Gastrocnemius medialis (tissue), 4 donors: ENCODE measurements at regions of chr5 and their contacts with region 1.

Region 1: DNA sequence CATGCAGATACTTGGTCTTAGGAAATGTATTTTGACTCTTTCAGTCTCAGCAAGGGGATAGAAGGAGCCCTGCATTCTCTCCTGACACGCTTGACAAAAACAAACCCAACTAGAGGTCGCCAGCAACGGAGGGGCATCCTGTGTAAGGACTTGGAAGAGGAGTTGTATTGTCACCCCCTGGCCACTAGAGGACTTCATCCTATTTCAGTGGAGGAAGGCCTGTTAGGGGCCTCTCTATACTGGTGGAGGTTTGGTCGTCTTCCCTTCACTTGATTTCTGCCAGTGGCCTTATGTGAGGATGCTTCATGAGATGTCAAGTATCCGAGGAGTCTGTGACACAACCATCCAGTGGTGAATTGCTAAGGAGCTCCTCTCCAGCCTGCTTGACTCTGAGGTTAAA is 122.8 kb upstream of the STC2 start:
- DNase-seq: peak in 1 of 2 donors; percentile 41
- ATAC-seq: no peak
- H3K4me3 ChIP-seq: no peak overlapping the region
- H3K27ac ChIP-seq: peak overlapping the region; percentile 88 to 94 (median 90)
- H3K4me1 ChIP-seq: peaks cover 36 to 45% of the 10 kb centered on the region in 2 donors
- H3K27me3 ChIP-seq: no peaks in the 10 kb centered on the region
- CTCF ChIP-seq: peak; percentile 40 to 70 (median 48)
- POLR2A ChIP-seq: no peak

Region 2: DNA sequence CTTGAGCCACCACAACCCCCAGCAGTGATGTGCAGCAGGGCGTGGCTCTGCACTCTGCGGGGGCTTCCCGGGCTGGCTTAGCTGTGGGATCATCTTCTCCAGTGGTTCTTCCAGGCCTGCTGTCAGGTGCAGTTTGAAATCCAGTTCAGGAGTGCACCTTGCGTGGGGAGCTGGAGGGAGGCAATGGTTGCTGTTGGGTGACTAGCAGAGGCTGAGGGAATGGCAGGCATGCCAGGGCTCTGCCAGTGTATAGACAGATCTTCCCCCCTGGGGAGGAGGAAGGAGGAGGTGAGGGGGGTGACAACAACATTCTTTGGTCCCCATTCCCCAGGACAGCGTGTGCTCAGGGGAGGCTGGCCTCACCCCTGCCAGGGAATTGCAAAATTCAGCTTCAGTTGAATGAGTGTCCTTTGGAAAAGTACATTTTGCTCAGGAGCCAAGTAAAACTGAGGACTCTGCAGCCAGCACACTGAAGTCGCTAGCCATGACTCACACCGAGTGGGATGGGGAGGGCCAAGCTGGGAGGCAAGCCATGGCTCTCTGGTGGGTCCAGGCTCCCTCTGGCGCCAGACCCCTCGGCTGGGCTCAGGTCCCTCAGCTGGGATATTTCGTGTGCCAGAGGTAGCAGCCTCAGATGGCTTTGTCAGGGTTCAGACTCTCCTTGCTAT is 582.0 kb before region 1 on chr5:
- in situ Hi-C with region 1: no loop called
- intact Hi-C with region 1: loop called (anchors 10 kb)
- DNase-seq: peak; percentile 94 to 97
- ATAC-seq: peak; percentile 65 to 67
- H3K4me3 ChIP-seq: peak overlapping the region in 3 of 4 donors; percentile 6 to 23 (median 18)
- H3K27ac ChIP-seq: peak overlapping the region; percentile 85 to 98 (median 94)
- H3K4me1 ChIP-seq: peaks cover 93 to 95% of the 10 kb centered on the region in 2 donors
- H3K27me3 ChIP-seq: no peaks in the 10 kb centered on the region
- CTCF ChIP-seq: peak in 4 of 5 experiments; percentile 41 to 52 (median 45)
- POLR2A ChIP-seq: peak; percentile 9 to 68

Region 3: DNA sequence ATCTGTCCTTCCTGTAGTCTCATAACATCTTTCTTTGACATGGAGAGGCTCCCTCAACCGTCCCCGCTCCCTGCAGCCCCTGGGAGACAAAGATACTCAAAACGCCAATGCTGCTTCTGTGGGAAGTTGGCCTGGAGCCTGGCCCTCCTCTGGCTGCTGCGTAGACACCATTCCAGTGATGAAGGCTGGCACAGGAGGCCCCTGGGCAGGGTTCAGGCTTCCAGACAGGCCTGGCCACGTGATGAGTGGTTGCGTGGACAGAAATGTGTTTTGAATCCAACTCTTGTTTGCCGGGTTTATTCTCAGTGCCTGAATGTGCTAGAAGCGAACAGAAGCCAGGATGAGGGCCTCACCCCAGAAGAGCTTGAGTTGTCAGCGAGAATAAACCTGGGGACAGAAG is 172.9 kb before region 1 on chr5:
- in situ Hi-C with region 1: no loop called
- intact Hi-C with region 1: no loop called
- DNase-seq: no peak
- ATAC-seq: no peak
- H3K4me3 ChIP-seq: no peak overlapping the region
- H3K27ac ChIP-seq: no peak overlapping the region
- H3K4me1 ChIP-seq: no peaks in the 10 kb centered on the region
- H3K27me3 ChIP-seq: peaks cover 0 to 6% (median 5%) of the 10 kb centered on the region in 3 donors
- CTCF ChIP-seq: no peak
- POLR2A ChIP-seq: no peak

Region 4: DNA sequence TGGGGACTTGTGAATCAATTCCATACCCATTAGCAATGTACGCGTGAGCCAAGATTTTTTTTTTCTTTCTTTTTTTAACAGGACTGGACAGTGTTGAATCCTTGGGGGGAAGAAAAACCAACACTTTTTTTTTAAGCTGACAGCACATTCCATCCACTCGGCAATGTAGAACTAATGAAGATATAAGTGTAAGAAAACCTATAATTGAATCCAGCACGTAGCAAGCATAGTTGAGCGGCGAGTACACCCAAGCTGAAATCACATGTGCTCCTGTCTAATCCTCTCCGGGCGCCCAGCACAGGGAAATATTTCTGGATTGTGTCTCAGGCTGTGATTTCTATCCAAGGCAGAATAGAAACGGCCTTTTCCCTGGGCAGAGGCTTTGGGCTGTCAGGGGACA is 47.3 kb after region 1 on chr5:
- in situ Hi-C with region 1: loop called in 1 of 4 experiments (anchors 5 kb)
- intact Hi-C with region 1: loop called (anchors 1 kb)
- DNase-seq: peak; percentile 69 to 74
- ATAC-seq: peak; percentile 61 to 70
- H3K4me3 ChIP-seq: peak overlapping the region in 2 of 4 donors; percentile 22 to 27
- H3K27ac ChIP-seq: peak overlapping the region; percentile 76 to 93 (median 84)
- H3K4me1 ChIP-seq: peaks cover 61 to 68% of the 10 kb centered on the region in 2 donors
- H3K27me3 ChIP-seq: no peaks in the 10 kb centered on the region
- CTCF ChIP-seq: no peak
- POLR2A ChIP-seq: peak in 1 of 2 donors; percentile 3

Region 5: DNA sequence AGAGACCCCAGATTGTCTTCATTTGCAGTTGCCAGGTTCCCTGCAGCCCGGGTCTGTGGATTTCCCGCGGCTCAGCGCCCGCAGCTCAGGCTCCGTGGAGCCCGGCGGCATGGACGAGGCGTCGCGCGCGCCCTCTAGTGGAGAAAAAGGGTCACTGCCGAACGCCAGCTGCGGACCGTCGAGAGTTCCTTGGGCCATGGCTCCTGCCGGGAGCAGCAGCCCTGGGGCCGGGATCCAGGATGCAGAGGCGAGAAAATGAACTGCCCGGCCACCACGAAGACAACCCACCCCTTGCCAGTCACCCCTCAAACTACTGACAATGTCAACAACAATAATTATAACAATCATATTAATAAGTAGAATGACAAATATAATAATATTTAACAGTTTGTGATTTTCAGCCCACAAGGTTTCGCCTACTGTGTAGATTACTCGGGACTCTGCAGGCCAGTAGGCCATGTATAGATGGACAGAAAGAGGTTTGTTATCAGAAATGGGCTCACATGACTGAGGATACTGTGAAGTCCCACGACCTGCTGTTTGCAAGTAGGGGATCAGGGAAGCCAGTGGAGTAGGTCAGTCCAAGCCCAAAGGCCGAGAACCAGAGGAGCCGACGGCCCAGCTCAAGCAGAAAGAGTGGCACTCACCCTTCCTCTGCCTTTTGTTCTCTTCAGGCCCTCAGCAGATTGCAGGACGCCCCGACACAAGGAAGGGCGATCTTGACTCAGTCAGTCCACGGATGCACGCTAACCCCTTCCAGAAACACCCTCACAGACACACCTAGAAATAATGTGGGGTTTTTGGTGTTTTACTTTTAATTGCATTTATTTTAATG is 122.3 kb after region 1 on chr5:
- in situ Hi-C with region 1: no loop called
- intact Hi-C with region 1: loop called (anchors 1 kb)
- DNase-seq: peak; percentile 42 to 64
- ATAC-seq: peak; percentile 93 to 94
- H3K4me3 ChIP-seq: peak overlapping the region in 3 of 4 donors; percentile 25 to 29 (median 28)
- H3K27ac ChIP-seq: no peak overlapping the region
- H3K4me1 ChIP-seq: peaks cover 5 to 7% of the 10 kb centered on the region in 2 donors
- H3K27me3 ChIP-seq: no peaks in the 10 kb centered on the region
- CTCF ChIP-seq: peak; percentile 85 to 99 (median 94)
- POLR2A ChIP-seq: no peak

Region 6: DNA sequence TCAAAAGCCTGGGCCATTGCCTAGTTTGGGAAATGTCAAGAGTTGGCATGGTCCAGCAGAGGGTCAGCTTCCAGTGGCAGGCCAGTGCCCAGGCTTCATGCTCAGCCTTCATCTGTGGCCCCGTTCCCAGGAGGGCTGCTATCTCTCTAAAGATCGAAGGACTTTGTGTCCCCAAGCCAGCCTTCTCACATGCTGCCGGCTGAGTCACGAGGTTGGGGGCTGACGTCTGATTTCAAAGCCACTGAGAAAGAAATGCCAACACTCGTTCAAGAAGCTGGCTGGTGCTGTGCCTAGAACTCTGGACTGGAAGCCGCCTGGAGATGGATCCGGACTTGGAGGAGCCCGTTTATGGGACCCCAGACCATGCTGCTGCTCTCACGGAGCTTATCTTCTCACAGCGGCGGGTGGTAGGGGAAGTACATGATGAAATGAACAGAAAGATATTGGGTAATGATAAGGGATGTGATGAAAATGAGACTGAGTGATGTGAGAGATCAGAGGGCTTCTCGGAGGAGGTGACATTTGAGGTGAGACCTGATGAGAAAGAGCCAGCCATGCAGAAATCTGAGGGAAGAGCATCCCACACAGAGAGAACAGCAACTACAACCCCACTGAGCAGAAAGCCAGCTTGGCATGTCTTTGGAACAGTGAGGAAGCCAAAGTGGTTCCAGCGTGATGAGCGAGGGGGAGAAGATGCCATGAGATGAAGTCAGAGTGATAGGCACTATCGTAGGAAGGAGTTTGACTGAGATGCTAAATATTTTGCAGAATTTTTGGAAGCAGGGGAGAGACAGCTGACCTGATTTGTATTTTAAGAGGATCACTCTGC is 220.3 kb after region 1 on chr5:
- in situ Hi-C with region 1: no loop called
- intact Hi-C with region 1: loop called (anchors 5 kb)
- DNase-seq: peak; percentile 92 to 97
- ATAC-seq: peak; percentile 85 to 88
- H3K4me3 ChIP-seq: peak overlapping the region; percentile 32 to 48 (median 44)
- H3K27ac ChIP-seq: peak overlapping the region; percentile 87 to 91 (median 88)
- H3K4me1 ChIP-seq: peaks cover 35 to 44% of the 10 kb centered on the region in 2 donors
- H3K27me3 ChIP-seq: no peaks in the 10 kb centered on the region
- CTCF ChIP-seq: no peak
- POLR2A ChIP-seq: peak; percentile 66 to 67

Region 7: GRCh38 chr5:173829817-173830216 is 378.8 kb after region 1 on chr5:
- in situ Hi-C with region 1: no loop called
- intact Hi-C with region 1: loop called (anchors 10 kb)
- DNase-seq: no peak
- ATAC-seq: no peak
- H3K4me3 ChIP-seq: no peak overlapping the region
- H3K27ac ChIP-seq: no peak overlapping the region
- H3K4me1 ChIP-seq: peaks cover 21 to 27% of the 10 kb centered on the region in 2 donors
- H3K27me3 ChIP-seq: no peaks in the 10 kb centered on the region
- CTCF ChIP-seq: no peak
- POLR2A ChIP-seq: no peak

Region 8: GRCh38 chr5:173972925-173973615 is 522.0 kb after region 1 on chr5:
- in situ Hi-C with region 1: no loop called
- intact Hi-C with region 1: loop called (anchors 5 kb)
- DNase-seq: peak; percentile 68 to 82
- ATAC-seq: peak; percentile 83 to 84
- H3K4me3 ChIP-seq: peak overlapping the region; percentile 45 to 63 (median 54)
- H3K27ac ChIP-seq: peak overlapping the region; percentile 74 to 85 (median 78)
- H3K4me1 ChIP-seq: peaks cover 5 to 8% of the 10 kb centered on the region in 2 donors
- H3K27me3 ChIP-seq: no peaks in the 10 kb centered on the region
- CTCF ChIP-seq: peak; percentile 88 to 98 (median 94)
- POLR2A ChIP-seq: no peak